Ascending aorta (tissue), 2 donors: ENCODE measurements at regions of chr1 and their contacts with region 1.

Region 1: DNA sequence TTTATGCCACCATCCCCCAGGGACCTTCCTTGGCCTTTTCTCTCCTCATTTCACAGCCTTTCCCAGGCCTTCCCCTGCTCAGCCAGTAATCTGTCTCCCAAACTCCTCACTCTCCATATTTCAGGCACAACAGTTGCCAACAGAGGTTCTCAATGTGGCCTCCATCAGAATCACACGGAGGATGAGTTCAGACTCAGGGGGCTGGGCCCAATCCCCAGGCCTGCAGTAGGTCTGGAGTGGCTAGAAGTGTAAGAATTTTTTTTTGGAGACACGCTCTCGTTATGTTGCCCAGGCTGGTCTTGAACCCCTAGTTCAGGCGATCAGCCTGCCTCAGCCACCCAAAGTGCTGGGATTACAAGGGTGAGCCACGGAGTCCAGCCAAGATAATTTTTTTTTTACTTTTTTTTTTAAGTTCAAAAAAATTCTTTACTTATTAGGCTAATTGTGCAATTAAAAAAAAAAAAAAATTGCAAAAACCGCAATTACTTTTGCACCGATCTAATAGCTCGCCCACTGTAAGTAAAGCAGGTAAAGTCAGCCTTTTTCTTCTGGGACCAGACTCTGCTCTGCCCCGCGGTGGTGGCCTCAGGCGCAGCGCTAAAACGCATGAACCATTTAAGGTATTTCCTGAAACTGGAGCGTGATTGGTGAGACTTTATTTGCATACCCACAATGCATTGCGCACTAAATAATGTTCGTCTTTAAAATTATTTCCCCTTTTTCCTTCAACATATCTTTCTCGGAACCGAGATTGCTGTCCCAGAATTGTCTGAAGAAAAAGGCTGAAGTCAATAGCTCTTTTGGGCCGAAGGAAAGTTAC is 18.7 kb downstream of the KIAA2013 start:
- DNase-seq: peak; percentile 87 to 97
- H3K4me3 ChIP-seq: peak overlapping the region in 1 of 2 donors; percentile 69
- H3K27ac ChIP-seq: peak overlapping the region; percentile 85 to 92
- H3K4me1 ChIP-seq: no peaks in the 10 kb centered on the region
- H3K27me3 ChIP-seq: no peaks in the 10 kb centered on the region
- CTCF ChIP-seq: peak; percentile 88 to 95 (median 94)

Region 2: DNA sequence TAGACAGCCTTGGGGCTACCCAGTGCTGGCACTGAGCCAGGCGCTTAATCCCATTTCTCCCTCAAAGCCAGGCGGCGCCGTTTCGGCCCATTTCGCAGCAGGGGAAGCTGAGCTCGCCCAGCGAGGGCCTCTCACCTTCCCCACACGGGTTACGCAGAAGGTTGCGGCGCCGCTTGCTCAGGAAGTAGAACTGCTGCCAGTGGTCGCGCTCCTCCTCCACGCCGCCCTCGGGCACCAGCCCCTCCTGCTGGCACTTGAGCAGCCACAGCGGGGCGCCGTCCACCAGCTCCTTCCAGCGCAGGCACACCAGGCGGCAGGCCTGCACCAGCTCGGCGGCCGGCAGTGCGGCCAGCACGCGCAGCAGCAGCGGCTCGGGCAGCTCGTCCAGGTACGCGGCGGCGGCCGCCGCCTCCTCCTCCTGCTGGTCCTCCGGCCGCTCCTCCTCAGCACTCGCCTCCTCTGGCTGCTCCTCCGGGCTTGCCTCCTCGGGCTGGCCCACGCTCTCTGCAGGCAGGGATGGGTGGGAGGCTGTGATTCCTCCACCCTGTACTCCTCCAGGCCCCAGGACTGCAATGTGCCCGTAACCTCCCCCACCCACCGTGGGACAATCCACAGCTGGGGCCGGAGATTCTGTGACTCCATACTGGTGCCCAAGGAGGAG is 257.0 kb before region 1 on chr1:
- intact Hi-C with region 1: loop called (anchors 10 kb)
- DNase-seq: peak; percentile 43 to 88
- H3K4me3 ChIP-seq: peak overlapping the region in 1 of 2 donors; percentile 47
- H3K27ac ChIP-seq: no peak overlapping the region
- H3K4me1 ChIP-seq: peaks cover 11 to 12% of the 10 kb centered on the region in 2 donors
- H3K27me3 ChIP-seq: no peaks in the 10 kb centered on the region
- CTCF ChIP-seq: peak; percentile 67 to 84 (median 78)

Region 3: DNA sequence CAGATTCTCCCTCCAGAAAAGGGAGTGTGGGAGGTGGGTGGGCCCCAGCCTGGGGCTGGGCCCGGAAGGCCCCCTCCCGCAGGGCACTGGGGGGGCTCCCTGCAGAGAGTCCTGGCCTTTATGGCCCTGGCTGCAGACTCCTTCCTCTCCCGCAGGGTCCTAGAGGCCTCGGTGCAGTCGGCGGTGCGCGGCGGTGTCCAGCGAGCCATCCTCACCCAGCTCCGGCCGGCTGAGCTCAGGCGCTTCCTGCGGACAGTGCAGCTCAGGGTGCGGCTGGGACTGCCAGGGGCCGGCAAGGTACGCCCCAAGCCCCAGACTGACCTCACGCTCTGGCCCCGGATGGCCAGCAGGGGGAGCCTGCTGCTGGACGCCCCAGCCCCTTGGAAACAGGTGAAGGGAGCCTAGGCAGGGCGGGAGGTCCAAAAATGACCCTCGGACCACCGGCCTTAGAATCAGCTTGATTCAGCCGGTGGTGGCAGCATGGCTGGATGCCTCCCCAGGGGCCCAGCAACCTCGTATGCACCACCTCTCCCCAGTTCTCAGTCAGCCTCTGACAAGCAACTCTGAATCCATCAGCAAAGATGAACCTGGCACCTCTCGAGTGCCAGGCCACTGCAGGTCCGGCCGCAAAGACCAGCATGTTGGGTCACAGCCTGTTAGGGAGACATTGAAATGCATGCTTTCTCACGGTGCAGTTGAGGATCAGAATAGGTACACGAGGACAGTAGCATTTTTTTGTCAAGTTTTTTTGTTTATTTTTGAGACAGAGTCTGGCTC is 122.3 kb before region 1 on chr1:
- intact Hi-C with region 1: loop called (anchors 5 kb)
- DNase-seq: peak in 1 of 2 donors; percentile 82
- H3K4me3 ChIP-seq: peak overlapping the region in 1 of 2 donors; percentile 53
- H3K27ac ChIP-seq: peak overlapping the region; percentile 51 to 56
- H3K4me1 ChIP-seq: peaks cover 17 to 48% of the 10 kb centered on the region in 2 donors
- H3K27me3 ChIP-seq: no peaks in the 10 kb centered on the region
- CTCF ChIP-seq: peak; percentile 86 to 94 (median 92)

Region 4: DNA sequence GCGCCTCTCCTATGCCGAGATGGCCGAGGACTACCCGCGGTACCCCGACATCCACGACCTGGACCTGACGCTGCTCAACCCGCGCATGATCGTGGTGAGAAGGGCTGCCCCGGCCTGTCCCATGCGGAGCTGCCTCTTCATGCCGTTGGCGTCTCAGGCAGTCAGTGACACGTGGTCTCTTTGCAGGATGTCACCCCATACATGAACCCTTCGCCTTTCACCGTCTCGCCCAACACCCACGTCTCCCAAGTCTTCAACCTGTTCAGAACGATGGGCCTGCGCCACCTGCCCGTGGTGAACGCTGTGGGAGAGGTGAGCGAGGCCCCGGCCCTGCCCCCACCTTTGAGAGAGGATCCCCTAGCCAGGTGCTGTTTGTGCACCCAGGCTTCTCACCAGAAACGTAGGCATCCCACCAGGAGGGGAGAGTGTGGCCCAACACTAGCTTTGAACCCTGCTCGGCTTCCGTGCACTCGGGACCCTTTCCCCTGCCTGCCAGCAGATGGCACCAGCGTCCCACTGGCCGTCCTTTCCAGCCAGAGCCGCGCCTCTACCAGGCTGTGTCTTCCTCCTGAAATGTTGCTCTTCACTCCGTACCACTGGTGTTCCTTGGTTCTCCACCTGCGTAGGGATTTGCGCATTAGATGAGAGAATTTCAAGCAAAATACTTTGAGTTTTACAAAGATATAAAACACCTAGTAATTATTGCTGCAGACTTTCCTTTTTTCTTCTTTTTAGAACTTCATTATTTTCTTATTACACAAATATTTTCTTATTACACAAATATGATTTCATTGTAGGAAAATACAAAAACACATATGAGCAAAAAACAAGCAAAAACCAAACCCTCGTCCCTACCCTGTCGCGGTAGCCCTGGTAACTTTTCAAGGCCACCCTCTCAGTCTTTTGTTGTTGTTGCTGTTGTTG is 68.9 kb before region 1 on chr1:
- intact Hi-C with region 1: loop called (anchors 2 kb)
- DNase-seq: peak in 1 of 2 donors; percentile 76
- H3K4me3 ChIP-seq: no peak overlapping the region
- H3K27ac ChIP-seq: no peak overlapping the region
- H3K4me1 ChIP-seq: peaks cover 0 to 5% of the 10 kb centered on the region in 2 donors
- H3K27me3 ChIP-seq: no peaks in the 10 kb centered on the region
- CTCF ChIP-seq: peak; percentile 91 to 98 (median 96)

Region 5: GRCh38 chr1:11934302-11935056 is 27.0 kb after region 1 on chr1 and contains the start of gene PLOD1:
- intact Hi-C with region 1: loop called (anchors 2 kb)
- DNase-seq: peak; percentile 70 to 96
- H3K4me3 ChIP-seq: peak within 1 kb of the TSS; percentile 68 to 78
- H3K27ac ChIP-seq: peak within 1 kb of the TSS; percentile 84 to 89
- H3K4me1 ChIP-seq: peaks cover 0 to 22% of the 10 kb centered on the region in 2 donors
- H3K27me3 ChIP-seq: no peaks in the 10 kb centered on the region
- CTCF ChIP-seq: no peak
- total RNA-seq, gene PLOD1: 79.9 TPM